GM12878 (cell line): ENCODE measurements at regions of chr3 and their contacts with region 1.

Region 1: GRCh38 chr3:177679568-177680441 is 482.5 kb upstream of the TBL1XR1 start:
- DNase-seq: no peak
- ATAC-seq: peak; percentile 87
- H3K4me3 ChIP-seq: no peak overlapping the region
- H3K27ac ChIP-seq: no peak overlapping the region
- H3K4me1 ChIP-seq: no peaks in the 10 kb centered on the region
- H3K27me3 ChIP-seq: no peaks in the 10 kb centered on the region
- CTCF ChIP-seq: no peak
- EP300 ChIP-seq: no peak
- POLR2A ChIP-seq: no peak
- RAD21 ChIP-seq: no peak

Region 2: GRCh38 chr3:177656310-177656709 is 23.5 kb before region 1 on chr3:
- CTCF ChIA-PET with region 1: no interaction called
- POLR2A ChIA-PET with region 1: no interaction called
- RAD21 ChIA-PET with region 1: no interaction called
- SMC1A ChIA-PET with region 1: no interaction called
- in situ Hi-C with region 1: no loop called
- intact Hi-C with region 1: loop called (anchors 1 kb)
- DNase-seq: no peak
- ATAC-seq: no peak
- H3K4me3 ChIP-seq: no peak overlapping the region
- H3K27ac ChIP-seq: no peak overlapping the region
- H3K4me1 ChIP-seq: no peaks in the 10 kb centered on the region
- H3K27me3 ChIP-seq: no peaks in the 10 kb centered on the region
- CTCF ChIP-seq: no peak
- EP300 ChIP-seq: no peak
- POLR2A ChIP-seq: no peak
- RAD21 ChIP-seq: no peak